ENCODE measurements at regions of chr22 and their contacts with region 1.

Region 1: GRCh38 chr22:41800348-41801146 is at the start of gene CCDC134:
- DNase-seq: peak; percentile 50 to 93
- H3K4me3 ChIP-seq: peak within 1 kb of the TSS; percentile 78 to 91 (median 86)
- H3K27ac ChIP-seq: peak within 1 kb of the TSS; percentile 73
- H3K4me1 ChIP-seq: peaks cover 8 to 15% (median 9%) of the 10 kb centered on the region in 4 experiments
- H3K27me3 ChIP-seq: no peaks in the 10 kb centered on the region
- CTCF ChIP-seq: no peak
- EP300 ChIP-seq: 0 out of 3 replicates have a peak, but pooled peaks of 1 of the 2 experiments have one; percentile 14
- POLR2A ChIP-seq: peak; percentile 83 to 94
- RAD21 ChIP-seq: no peak
- total RNA-seq, gene CCDC134: 20.0 and 21.4 TPM in 2 replicates

Region 2: DNA sequence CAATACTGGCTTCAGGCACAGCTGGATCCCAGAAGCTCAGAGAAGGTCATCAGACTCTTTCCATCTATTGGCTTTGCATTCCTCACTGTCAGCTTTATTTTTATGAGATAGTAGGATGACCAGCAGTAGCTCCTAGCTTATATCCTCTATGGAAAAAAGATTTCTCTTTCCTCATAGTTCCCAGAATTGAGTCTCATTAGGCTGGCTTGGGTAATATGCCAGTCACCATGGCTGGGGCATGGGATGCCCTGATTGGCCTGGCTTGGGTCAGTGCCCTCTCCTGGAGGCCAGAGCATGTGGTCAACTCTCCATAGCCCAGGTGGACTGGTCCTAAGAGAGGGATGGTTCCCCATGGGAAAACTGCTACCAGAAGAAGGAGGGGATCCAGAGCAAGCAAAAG is 14.1 kb before region 1 on chr22:
- CTCF ChIA-PET with region 1: interaction called, 4 read pairs
- POLR2A ChIA-PET with region 1: interaction called, 30 read pairs
- DNase-seq: no peak
- H3K4me3 ChIP-seq: no peak overlapping the region
- H3K27ac ChIP-seq: no peak overlapping the region
- H3K4me1 ChIP-seq: no peaks in the 10 kb centered on the region; a peak in 1 of 7 replicates
- H3K27me3 ChIP-seq: no peaks in the 10 kb centered on the region; a peak in 2 of 7 replicates
- CTCF ChIP-seq: no peak
- EP300 ChIP-seq: no peak
- POLR2A ChIP-seq: no peak
- RAD21 ChIP-seq: no peak

Region 3: GRCh38 chr22:41832553-41833368 is 32.2 kb after region 1 on chr22 and contains the start of gene SREBF2:
- CTCF ChIA-PET with region 1: interaction called, 3 read pairs
- POLR2A ChIA-PET with region 1: interaction called, 19 read pairs
- DNase-seq: peak; percentile 97 to 100
- H3K4me3 ChIP-seq: peak within 1 kb of the TSS; percentile 76 to 87 (median 85)
- H3K27ac ChIP-seq: peak within 1 kb of the TSS; percentile 91
- H3K4me1 ChIP-seq: peaks cover 0 to 5% (median 1%) of the 10 kb centered on the region in 4 experiments; a peak in 3 of 7 replicates
- H3K27me3 ChIP-seq: no peaks in the 10 kb centered on the region
- CTCF ChIP-seq: no peak
- EP300 ChIP-seq: peak in 1 of 2 experiments; percentile 83; a peak in 1 of 3 replicates
- POLR2A ChIP-seq: peak; percentile 78 to 85
- RAD21 ChIP-seq: no peak
- total RNA-seq, gene SREBF2: 144 TPM in 2 replicates